ENCODE measurements at regions of chr2 and their contacts with region 1.

Region 1: DNA sequence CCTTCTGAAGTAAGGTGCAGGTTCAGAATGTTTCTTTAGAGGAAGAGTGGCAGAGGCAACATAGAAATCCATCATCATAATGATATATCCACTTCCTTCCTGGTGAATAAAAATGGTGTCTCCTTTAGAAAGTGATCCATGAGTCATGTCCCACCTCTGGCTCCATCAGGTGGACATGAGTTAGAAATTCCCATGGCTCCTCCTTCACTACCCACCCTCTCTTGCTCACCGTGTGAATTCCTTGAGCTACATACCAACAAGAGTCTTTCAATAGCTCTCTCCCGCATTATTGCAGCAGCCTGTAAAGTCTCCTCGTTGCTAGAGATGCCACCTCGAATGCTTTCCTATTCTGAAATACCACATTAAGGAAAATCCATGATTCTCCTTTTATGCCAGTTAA is 317.6 kb downstream of the LNPK start:
- DNase-seq: no peak
- H3K4me3 Mint-ChIP-seq: no peak overlapping the region
- H3K27ac Mint-ChIP-seq: no peak overlapping the region
- H3K4me1 Mint-ChIP-seq: no peaks in the 10 kb centered on the region
- H3K27me3 Mint-ChIP-seq: no peaks in the 10 kb centered on the region

Region 2: GRCh38 chr2:174573621-174574081 is 1110.8 kb before region 1 on chr2:
- intact Hi-C with region 1: no loop called
- DNase-seq: no peak
- H3K4me3 Mint-ChIP-seq: no peak overlapping the region
- H3K27ac Mint-ChIP-seq: peak overlapping the region; percentile 82
- H3K4me1 Mint-ChIP-seq: peaks cover 69% of the 10 kb centered on the region
- H3K27me3 Mint-ChIP-seq: no peaks in the 10 kb centered on the region

Region 3: DNA sequence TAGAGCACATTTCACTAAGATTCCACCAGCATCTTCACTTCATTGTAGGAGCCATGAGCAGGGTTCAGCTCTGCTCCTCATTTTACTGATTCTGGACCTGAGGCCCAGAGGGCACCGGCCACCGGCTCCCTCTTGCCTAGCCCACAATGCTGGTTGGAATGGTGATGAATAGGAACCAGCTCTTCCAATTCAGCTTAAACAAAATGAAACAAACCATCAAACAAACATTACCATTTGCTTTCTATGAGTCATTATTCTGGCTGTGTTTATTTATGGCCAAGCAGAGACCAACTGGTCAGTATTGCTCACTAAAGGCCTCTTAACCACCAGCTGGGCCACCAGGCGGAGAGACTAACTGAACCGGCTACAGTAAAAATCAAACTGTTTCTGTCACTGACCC is 761.5 kb after region 1 on chr2:
- intact Hi-C with region 1: loop called (anchors 10 kb)
- DNase-seq: no peak
- H3K4me3 Mint-ChIP-seq: no peak overlapping the region
- H3K27ac Mint-ChIP-seq: no peak overlapping the region
- H3K4me1 Mint-ChIP-seq: peaks cover 3% of the 10 kb centered on the region
- H3K27me3 Mint-ChIP-seq: peaks cover 8% of the 10 kb centered on the region